Right ventricle myocardium superior (tissue), 1 donor: ENCODE measurements at regions of chr11 and their contacts with region 1.

Region 1: DNA sequence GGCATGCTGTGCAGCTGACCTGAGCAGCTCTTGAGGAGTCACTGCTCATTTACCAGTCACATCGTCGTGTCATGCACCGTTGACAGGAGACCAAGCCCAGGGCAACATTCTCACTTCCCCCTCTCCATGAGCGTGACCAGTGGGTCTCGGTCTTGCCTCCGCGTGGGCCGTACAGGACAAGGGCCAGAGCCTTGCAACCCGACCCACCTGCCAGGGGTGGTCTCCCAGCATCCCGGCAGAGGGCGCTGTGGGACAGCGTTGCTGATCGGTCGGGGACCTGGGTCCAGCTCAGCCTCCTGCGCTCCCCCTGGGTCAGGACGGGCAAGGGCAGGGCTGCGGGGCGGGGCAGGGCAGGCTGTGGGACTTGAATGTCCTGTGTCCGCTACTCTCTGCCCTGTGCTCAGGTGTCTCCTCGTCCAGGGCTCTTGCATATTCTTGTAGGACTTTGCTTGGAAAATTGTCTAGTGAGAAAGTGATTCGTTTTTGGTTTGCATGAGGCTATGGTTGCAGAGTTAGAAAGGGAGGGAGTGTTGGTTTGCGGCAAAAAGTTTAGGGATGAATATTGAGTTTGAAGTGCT is 16.2 kb downstream of the EIF4G2 start:
- DNase-seq: peak; percentile 93
- ATAC-seq: peak; percentile 95

Region 2: DNA sequence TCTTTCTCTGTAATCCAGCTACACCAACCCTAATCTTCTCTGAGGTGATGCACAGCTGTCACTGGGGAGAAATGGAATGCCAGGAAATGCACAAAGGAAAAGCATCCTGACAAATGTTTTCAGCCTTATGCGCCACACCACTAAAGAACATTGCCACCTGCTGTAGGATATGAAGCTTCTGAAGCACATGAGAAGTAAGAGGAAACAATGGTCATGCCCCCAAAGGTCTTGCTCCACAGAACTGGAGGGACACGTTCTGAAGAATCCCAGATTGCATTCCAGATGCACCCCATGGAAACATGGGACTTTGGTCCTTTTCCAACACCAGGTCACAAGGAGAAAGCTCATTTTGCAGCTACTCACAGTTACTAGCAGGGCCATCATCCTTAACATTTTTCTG is 114.0 kb after region 1 on chr11:
- intact Hi-C with region 1: no loop called
- DNase-seq: no peak
- ATAC-seq: peak; percentile 57

Region 3: DNA sequence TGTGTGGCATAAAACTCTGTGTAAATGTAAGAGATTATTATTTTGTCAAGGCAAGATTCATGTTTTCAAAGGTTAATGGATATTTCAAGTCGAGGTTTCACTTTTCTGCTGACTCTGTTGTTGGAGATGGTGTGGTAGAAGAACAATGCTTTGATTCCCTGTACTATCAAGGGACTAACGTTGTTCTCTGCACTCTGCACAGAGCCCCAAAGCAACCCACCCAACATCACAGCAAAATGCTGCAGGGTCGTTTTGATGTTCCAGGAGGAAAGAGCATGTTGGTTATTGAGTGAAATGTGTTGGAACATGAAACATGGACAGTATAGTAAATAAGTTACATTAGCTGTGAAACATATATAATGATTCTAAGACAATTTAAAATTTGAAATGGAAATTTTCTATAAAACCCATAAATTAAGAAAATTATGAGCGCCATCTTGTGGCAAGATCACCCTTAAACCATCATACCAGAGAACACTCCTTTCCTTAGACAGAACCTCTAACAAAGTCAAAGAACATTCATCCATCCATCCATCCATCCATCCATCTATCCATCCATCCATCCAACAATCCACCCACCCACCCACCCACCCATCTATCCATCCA is 229.7 kb after region 1 on chr11:
- intact Hi-C with region 1: loop called (anchors 5 kb)
- DNase-seq: no peak
- ATAC-seq: no peak